ENCODE measurements at regions of chr5 and their contacts with region 1.

Region 1: DNA sequence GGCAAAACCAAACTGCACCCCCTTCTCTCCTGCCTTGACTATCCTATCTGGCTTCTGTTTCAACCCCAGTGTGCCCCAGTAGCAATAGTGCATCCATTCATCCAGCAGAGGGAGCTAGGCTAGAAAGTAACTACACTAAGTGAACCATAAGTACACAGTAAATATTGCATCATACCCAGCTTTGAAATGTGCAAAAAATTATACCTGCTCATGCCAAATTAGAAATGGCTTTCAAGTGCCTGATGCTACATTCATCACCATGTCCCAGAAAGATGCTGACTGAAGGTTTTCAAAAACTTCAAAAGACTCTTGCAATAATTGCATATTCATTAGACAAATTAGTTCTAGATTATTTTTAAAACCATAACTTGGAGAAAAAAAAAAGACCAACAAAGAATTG is 153.5 kb downstream of the PRELID2 start:
- DNase-seq: peak; percentile 22
- H3K4me3 ChIP-seq: no peak overlapping the region
- H3K27ac ChIP-seq: no peak overlapping the region
- H3K4me1 ChIP-seq: no peaks in the 10 kb centered on the region
- H3K27me3 ChIP-seq: no peaks in the 10 kb centered on the region
- CTCF ChIP-seq: peak in 3 of 4 experiments; percentile 46 to 63 (median 59)
- POLR2A ChIP-seq: no peak

Region 2: DNA sequence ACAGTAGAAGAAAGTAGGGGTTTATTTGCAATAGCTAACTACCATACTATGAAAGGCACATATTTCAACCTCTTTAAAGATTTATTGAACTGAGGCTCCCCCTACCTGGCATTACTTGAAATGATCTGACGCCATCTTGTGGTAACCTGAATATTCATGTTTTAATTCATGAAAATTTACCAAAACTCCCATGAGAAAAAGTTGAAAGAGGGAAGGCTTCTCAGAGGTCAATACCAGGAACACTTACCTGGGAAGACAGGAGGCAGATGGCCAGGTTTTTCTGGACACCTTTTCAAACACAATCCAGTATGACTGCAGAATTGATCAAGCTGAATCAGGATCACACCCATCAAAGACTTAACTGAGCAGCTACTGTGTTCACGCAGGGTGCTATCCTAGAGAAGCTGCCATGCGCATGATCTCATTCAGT is 144.1 kb after region 1 on chr5:
- intact Hi-C with region 1: loop called (anchors 10 kb)
- DNase-seq: no peak
- H3K4me3 ChIP-seq: no peak overlapping the region
- H3K27ac ChIP-seq: no peak overlapping the region
- H3K4me1 ChIP-seq: peaks cover 5% of the 10 kb centered on the region
- H3K27me3 ChIP-seq: no peaks in the 10 kb centered on the region
- CTCF ChIP-seq: peak in 3 of 4 experiments; percentile 65 to 85 (median 82)
- POLR2A ChIP-seq: no peak

Region 3: GRCh38 chr5:146049014-146049703 is 367.5 kb after region 1 on chr5:
- intact Hi-C with region 1: loop called (anchors 10 kb)
- DNase-seq: peak; percentile 57
- H3K4me3 ChIP-seq: no peak overlapping the region
- H3K27ac ChIP-seq: no peak overlapping the region
- H3K4me1 ChIP-seq: peaks cover 4% of the 10 kb centered on the region
- H3K27me3 ChIP-seq: no peaks in the 10 kb centered on the region
- CTCF ChIP-seq: peak in 3 of 4 experiments; percentile 64 to 74 (median 72)
- POLR2A ChIP-seq: no peak